ENCODE measurements at regions of chr2 and their contacts with region 1.

Region 1: GRCh38 chr2:199704358-199705238 is 146.4 kb downstream of the FTCDNL1 start:
- DNase-seq: peak; percentile 74
- ATAC-seq: peak; percentile 82
- H3K4me3 ChIP-seq: no peak overlapping the region
- H3K27ac ChIP-seq: no peak overlapping the region
- H3K4me1 ChIP-seq: no peaks in the 10 kb centered on the region
- H3K27me3 ChIP-seq: no peaks in the 10 kb centered on the region; the same call in 1 of the 2 replicates
- CTCF ChIP-seq: peak; percentile 90

Region 2: DNA sequence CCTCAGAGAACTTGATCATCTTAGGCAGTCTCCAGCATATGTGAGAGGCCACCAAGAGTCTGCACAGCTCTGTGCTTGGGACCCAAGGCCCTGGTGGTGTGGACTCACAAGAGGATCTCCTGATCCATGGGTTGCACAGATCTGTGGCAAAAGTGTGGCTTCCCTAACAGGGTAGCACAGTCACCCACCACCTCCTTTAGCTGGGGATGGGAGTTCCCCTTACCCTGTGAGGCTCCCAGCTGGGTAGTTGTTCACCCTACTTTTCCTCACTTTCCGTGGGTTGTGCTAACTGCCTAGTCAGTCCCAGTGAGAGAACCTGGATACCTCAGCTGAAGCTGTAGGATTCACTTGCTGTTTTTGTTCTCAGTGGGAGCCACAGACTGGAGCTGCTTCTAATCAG is 22.7 kb after region 1 on chr2:
- CTCF ChIA-PET with region 1: no interaction called
- POLR2A ChIA-PET with region 1: no interaction called
- intact Hi-C with region 1: no loop called
- DNase-seq: no peak
- ATAC-seq: no peak
- H3K4me3 ChIP-seq: no peak overlapping the region
- H3K27ac ChIP-seq: no peak overlapping the region
- H3K4me1 ChIP-seq: no peaks in the 10 kb centered on the region
- H3K27me3 ChIP-seq: peaks cover 24% of the 10 kb centered on the region
- CTCF ChIP-seq: no peak

Region 3: DNA sequence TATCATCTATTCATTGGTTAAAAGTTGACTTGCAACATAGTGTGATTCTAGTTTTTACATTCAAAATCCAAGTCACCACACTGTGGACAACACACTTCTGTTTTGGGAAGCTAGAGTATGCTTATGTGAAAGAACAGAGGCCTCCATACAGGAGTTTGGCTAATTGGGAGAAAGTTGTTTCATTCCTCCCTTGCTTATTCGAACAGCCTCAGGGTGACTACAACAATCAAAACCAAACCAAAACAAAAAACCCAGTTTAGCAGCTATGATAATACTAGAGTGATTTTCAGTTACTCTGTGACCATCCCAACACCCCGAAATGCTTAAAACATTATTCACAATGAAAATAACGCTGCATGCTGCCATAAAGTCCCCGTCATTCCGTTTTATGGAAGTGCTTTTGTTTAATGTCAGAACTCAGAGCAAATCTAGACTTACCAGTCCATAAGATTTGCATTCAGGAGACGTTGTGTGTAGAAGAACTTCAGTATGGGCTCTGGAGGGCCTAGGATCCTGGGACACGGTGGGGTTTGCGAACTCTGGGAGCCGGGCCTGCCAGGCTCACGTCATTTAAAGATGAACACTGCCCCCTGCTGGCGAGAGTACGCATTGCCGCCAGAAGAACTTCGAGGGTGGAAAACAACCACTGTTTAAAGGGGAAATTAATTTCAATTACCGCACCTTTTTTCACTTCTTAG is 35.0 kb after region 1 on chr2:
- CTCF ChIA-PET with region 1: interaction called, 4 read pairs
- POLR2A ChIA-PET with region 1: no interaction called
- intact Hi-C with region 1: loop called (anchors 1 kb)
- DNase-seq: peak; percentile 78
- ATAC-seq: peak; percentile 62
- H3K4me3 ChIP-seq: no peak overlapping the region
- H3K27ac ChIP-seq: no peak overlapping the region
- H3K4me1 ChIP-seq: peaks cover 16% of the 10 kb centered on the region
- H3K27me3 ChIP-seq: peaks cover 37% of the 10 kb centered on the region
- CTCF ChIP-seq: peak; percentile 98

Region 4: GRCh38 chr2:199798831-199799580 is 94.4 kb after region 1 on chr2:
- CTCF ChIA-PET with region 1: no interaction called
- POLR2A ChIA-PET with region 1: no interaction called
- intact Hi-C with region 1: no loop called
- DNase-seq: no peak
- ATAC-seq: no peak
- H3K4me3 ChIP-seq: no peak overlapping the region
- H3K27ac ChIP-seq: no peak overlapping the region
- H3K4me1 ChIP-seq: no peaks in the 10 kb centered on the region
- H3K27me3 ChIP-seq: peaks cover 49% of the 10 kb centered on the region
- CTCF ChIP-seq: no peak